Heart right ventricle (tissue), 16 donors: ENCODE measurements at regions of chr20 and their contacts with region 1.

Region 1: GRCh38 chr20:2984956-2985661 is 58.3 kb upstream of the GNRH2 start:
- DNase-seq: no peak
- ATAC-seq: peak in 5 of 8 donors; percentile 28 to 41 (median 30)
- H3K4me3 ChIP-seq: no peak overlapping the region
- H3K27ac ChIP-seq: no peak overlapping the region
- H3K4me1 ChIP-seq: peaks cover 0 to 57% (median 9%) of the 10 kb centered on the region in 9 donors
- H3K27me3 ChIP-seq: no peaks in the 10 kb centered on the region
- CTCF ChIP-seq: no peak

Region 2: GRCh38 chr20:2767768-2768631 is 217.1 kb before region 1 on chr20:
- intact Hi-C with region 1: loop called in 1 of 10 experiments (anchors 10 kb)
- DNase-seq: peak; percentile 23 to 41
- ATAC-seq: peak; percentile 55 to 89 (median 72)
- H3K4me3 ChIP-seq: no peak overlapping the region
- H3K27ac ChIP-seq: no peak overlapping the region
- H3K4me1 ChIP-seq: peaks cover 0 to 10% (median 0%) of the 10 kb centered on the region in 9 donors
- H3K27me3 ChIP-seq: peaks cover 0 to 52% (median 35%) of the 10 kb centered on the region in 7 donors
- CTCF ChIP-seq: no peak

Region 3: GRCh38 chr20:2873010-2873746 is 111.9 kb before region 1 on chr20 and contains the start of gene PTPRA:
- intact Hi-C with region 1: loop called in 2 of 10 experiments (anchors 10 kb)
- DNase-seq: peak; percentile 93 to 94
- ATAC-seq: peak; percentile 96 to 99 (median 97)
- H3K4me3 ChIP-seq: peak within 1 kb of the TSS; percentile 65 to 100 (median 91)
- H3K27ac ChIP-seq: peak within 1 kb of the TSS; percentile 68 to 93 (median 83)
- H3K4me1 ChIP-seq: peaks cover 2 to 64% (median 40%) of the 10 kb centered on the region in 9 donors
- H3K27me3 ChIP-seq: no peaks in the 10 kb centered on the region
- CTCF ChIP-seq: no peak
- total RNA-seq, gene PTPRA: 22.1 to 37.3 (median 30.1) TPM

Region 4: GRCh38 chr20:3515379-3516170 is 530.5 kb after region 1 on chr20:
- intact Hi-C with region 1: no loop called
- DNase-seq: no peak
- ATAC-seq: no peak
- H3K4me3 ChIP-seq: no peak overlapping the region
- H3K27ac ChIP-seq: no peak overlapping the region
- H3K4me1 ChIP-seq: peaks cover 0 to under 1% (median 0%) of the 10 kb centered on the region in 9 donors
- H3K27me3 ChIP-seq: no peaks in the 10 kb centered on the region
- CTCF ChIP-seq: no peak